ENCODE measurements at regions of chr10 and their contacts with region 1.

Region 1: GRCh38 chr10:95363303-95363912 is 72.6 kb upstream of the PDLIM1 start:
- DNase-seq: peak; percentile 80
- ATAC-seq: peak; percentile 83
- H3K4me3 ChIP-seq: no peak overlapping the region
- H3K27ac ChIP-seq: no peak overlapping the region
- H3K4me1 ChIP-seq: no peaks in the 10 kb centered on the region
- H3K27me3 ChIP-seq: no peaks in the 10 kb centered on the region
- CTCF ChIP-seq: peak; percentile 84

Region 2: GRCh38 chr10:95133016-95133752 is 230.2 kb before region 1 on chr10:
- CTCF ChIA-PET with region 1: no interaction called
- POLR2A ChIA-PET with region 1: no interaction called
- intact Hi-C with region 1: loop called (anchors 1 kb)
- DNase-seq: peak; percentile 82
- ATAC-seq: peak; percentile 62
- H3K4me3 ChIP-seq: no peak overlapping the region
- H3K27ac ChIP-seq: no peak overlapping the region
- H3K4me1 ChIP-seq: no peaks in the 10 kb centered on the region
- H3K27me3 ChIP-seq: no peaks in the 10 kb centered on the region
- CTCF ChIP-seq: peak; percentile 82

Region 3: GRCh38 chr10:95201736-95202135 is 161.7 kb before region 1 on chr10:
- CTCF ChIA-PET with region 1: interaction called, 15 read pairs
- POLR2A ChIA-PET with region 1: no interaction called
- intact Hi-C with region 1: loop called (anchors 1 kb)
- DNase-seq: peak; percentile 92
- ATAC-seq: peak; percentile 100
- H3K4me3 ChIP-seq: no peak overlapping the region
- H3K27ac ChIP-seq: no peak overlapping the region
- H3K4me1 ChIP-seq: no peaks in the 10 kb centered on the region
- H3K27me3 ChIP-seq: no peaks in the 10 kb centered on the region
- CTCF ChIP-seq: peak; percentile 88

Region 4: GRCh38 chr10:95236068-95236903 is 127.1 kb before region 1 on chr10:
- CTCF ChIA-PET with region 1: no interaction called
- POLR2A ChIA-PET with region 1: no interaction called
- intact Hi-C with region 1: no loop called
- DNase-seq: peak; percentile 73
- ATAC-seq: peak; percentile 60
- H3K4me3 ChIP-seq: peak overlapping the region; percentile 22; the same call in 1 of the 2 replicates
- H3K27ac ChIP-seq: peak overlapping the region; percentile 75
- H3K4me1 ChIP-seq: peaks cover 37% of the 10 kb centered on the region
- H3K27me3 ChIP-seq: no peaks in the 10 kb centered on the region
- CTCF ChIP-seq: no peak

Region 5: GRCh38 chr10:95246579-95247051 is 116.8 kb before region 1 on chr10:
- CTCF ChIA-PET with region 1: interaction called, 7 read pairs
- POLR2A ChIA-PET with region 1: no interaction called
- intact Hi-C with region 1: loop called (anchors 1 kb)
- DNase-seq: peak; percentile 74
- ATAC-seq: peak; percentile 32
- H3K4me3 ChIP-seq: no peak overlapping the region
- H3K27ac ChIP-seq: no peak overlapping the region
- H3K4me1 ChIP-seq: peaks cover 25% of the 10 kb centered on the region
- H3K27me3 ChIP-seq: no peaks in the 10 kb centered on the region
- CTCF ChIP-seq: peak; percentile 80

Measured in PC-3 (cell line).